ENCODE measurements at regions of chr6 and their contacts with region 1.

Region 1: DNA sequence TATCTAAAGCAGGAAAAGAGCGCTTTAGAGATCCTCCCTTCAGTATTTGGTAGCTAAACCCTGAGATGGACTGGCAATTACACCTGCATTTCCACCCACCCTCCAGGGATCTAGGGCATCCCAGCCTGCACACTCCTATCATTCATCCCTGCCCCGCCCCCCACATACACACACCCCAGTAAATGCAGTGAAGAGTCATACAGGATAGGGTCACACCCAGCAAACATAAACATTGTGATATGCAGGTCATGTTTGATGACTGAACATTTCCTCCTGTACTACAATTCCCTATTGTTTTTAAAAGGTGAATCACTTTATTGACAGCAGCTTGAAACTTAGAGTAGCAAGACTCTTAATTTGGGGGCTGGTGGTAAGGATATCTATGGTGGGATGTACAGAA is 112.9 kb downstream of the FOXO3 start:
- DNase-seq: peak in 1 of 2 donors; percentile 50
- H3K4me3 ChIP-seq: no peak overlapping the region
- H3K27ac ChIP-seq: no peak overlapping the region
- H3K4me1 ChIP-seq: peaks cover 62 to 100% (median 94%) of the 10 kb centered on the region in 4 donors
- H3K27me3 ChIP-seq: no peaks in the 10 kb centered on the region
- CTCF ChIP-seq: no peak
- EP300 ChIP-seq: no peak
- POLR2A ChIP-seq: no peak

Region 2: DNA sequence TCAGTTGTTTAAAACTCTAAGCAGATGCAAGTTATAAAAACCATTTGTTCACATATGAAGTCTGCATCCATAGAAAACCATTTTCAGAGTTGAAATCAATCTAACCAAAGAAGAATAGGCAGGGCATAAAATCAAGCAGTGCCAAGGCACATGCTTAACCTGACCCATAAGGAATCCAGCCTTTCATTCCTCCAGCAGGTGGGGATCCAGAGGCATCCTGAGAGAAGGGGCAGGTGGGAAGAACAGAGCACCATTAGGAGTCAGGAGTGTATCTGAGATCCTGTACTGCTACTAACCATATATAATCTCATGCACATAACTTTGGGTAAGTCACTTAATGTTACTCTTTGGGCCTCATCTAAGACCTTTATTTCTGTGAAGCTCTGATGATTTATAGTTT is 142.3 kb before region 1 on chr6:
- intact Hi-C with region 1: no loop called
- DNase-seq: no peak
- H3K4me3 ChIP-seq: no peak overlapping the region
- H3K27ac ChIP-seq: no peak overlapping the region
- H3K4me1 ChIP-seq: peaks cover 0 to 9% (median 0%) of the 10 kb centered on the region in 4 donors
- H3K27me3 ChIP-seq: no peaks in the 10 kb centered on the region
- CTCF ChIP-seq: no peak
- EP300 ChIP-seq: no peak
- POLR2A ChIP-seq: no peak

Region 3: DNA sequence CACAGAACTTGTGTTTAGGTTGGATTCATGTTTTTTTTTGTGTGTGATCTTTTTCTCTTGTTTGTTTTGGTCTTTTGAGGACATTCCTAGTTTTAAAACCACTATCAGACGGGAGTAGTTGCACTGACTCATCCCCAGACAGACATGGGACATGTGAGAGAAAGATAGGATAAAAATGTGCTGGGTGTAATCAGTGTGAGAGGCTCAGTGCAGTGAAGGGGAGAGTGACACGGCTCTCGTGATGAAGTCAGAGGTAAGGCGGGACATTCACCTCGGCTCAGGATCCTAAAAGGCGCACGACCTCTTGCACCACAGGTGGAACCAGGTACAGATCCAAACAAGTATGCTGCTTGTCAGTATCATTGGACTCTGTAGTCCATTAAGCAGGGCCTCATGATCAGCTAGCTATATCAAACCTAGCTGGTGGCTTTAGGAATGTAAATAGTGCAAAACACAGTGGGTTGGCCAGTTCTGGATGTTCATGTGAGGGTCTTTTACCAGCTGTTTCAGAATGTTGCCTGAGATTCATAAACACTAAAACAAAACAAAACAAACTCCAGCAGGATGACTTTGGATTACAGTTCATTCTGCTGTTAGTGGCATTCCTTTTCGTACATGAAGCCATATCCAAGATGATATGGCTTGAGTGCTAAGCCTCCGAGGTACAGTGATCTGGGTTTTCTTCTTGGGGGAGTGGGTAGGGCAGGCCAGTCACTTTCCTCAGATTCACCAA is 94.8 kb before region 1 on chr6:
- intact Hi-C with region 1: loop called (anchors 10 kb)
- DNase-seq: no peak
- H3K4me3 ChIP-seq: no peak overlapping the region
- H3K27ac ChIP-seq: peak overlapping the region; percentile 9 to 79 (median 70)
- H3K4me1 ChIP-seq: peaks cover 77 to 100% (median 92%) of the 10 kb centered on the region in 4 donors
- H3K27me3 ChIP-seq: no peaks in the 10 kb centered on the region
- CTCF ChIP-seq: no peak
- EP300 ChIP-seq: no peak
- POLR2A ChIP-seq: no peak

Measured in stomach (tissue), 19 donors.